ENCODE measurements at regions of chr19 and their contacts with region 1.

Region 1: DNA sequence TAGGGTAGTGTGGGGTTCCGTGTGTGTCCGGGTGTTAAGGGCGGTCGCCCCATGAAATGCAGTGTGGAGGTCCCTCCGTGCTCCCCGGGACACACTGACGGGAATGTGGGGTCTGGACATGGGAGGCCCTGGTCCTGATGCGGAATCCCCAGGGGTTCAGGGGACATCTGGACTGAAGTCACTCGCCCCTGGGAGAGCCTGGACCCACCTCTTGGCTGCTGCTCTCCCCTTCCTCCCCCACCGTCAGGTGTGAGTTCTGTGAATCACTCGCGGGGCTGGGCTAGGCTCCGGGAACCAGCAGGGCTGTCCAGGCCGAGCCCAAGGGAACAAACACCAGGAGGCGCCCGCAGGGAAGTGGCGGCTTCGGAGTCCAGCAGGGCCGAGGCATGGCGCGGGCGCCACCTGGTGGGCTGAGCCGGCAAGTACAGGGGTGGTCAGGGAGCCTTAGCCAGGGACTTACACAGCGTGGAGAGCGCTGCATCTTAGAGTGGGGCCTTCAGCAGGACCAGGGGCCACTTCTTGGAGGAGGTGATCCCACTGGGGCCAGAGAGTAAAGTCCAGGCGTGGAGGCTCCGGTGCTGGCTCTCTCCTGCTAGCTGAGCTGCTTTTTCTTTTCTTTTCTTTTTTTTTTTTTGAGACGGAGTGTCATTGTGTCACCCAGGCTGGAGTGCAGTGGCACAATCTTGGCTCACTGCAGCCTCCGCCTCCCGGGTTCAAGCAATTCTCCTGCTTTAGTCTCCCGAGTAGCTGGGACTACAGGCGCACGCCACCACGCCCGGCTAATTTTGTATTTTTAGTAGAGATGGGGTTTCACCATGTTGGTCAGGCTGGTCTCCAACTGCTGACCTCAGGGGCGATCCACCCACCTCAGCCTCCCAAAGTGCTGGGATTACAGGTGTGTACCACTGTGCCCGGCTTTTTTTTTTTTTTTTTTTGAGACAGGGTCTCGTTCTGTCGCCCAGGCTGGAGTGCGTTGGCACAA is 20.1 kb downstream of the WTIP start:
- DNase-seq: peak; percentile 76
- ATAC-seq: peak; percentile 82
- H3K4me3 ChIP-seq: no peak overlapping the region
- H3K27ac ChIP-seq: no peak overlapping the region
- H3K4me1 ChIP-seq: peaks cover 24% of the 10 kb centered on the region
- H3K27me3 ChIP-seq: no peaks in the 10 kb centered on the region
- CTCF ChIP-seq: peak; percentile 99
- EP300 ChIP-seq: no peak
- POLR2A ChIP-seq: no peak
- RAD21 ChIP-seq: peak; percentile 98

Region 2: GRCh38 chr19:34471906-34472700 is 29.5 kb before region 1 on chr19:
- CTCF ChIA-PET with region 1: interaction called, 12 read pairs
- POLR2A ChIA-PET with region 1: no interaction called
- in situ Hi-C with region 1: no loop called
- intact Hi-C with region 1: loop called (anchors 1 kb)
- DNase-seq: no peak
- ATAC-seq: no peak
- H3K4me3 ChIP-seq: no peak overlapping the region
- H3K27ac ChIP-seq: no peak overlapping the region
- H3K4me1 ChIP-seq: peaks cover 11% of the 10 kb centered on the region
- H3K27me3 ChIP-seq: no peaks in the 10 kb centered on the region
- CTCF ChIP-seq: no peak
- EP300 ChIP-seq: no peak
- POLR2A ChIP-seq: no peak
- RAD21 ChIP-seq: no peak

Region 3: GRCh38 chr19:34556488-34556887 is 54.9 kb after region 1 on chr19:
- CTCF ChIA-PET with region 1: no interaction called
- POLR2A ChIA-PET with region 1: no interaction called
- in situ Hi-C with region 1: no loop called
- intact Hi-C with region 1: no loop called
- DNase-seq: peak; percentile 13
- ATAC-seq: peak; percentile 81
- H3K4me3 ChIP-seq: no peak overlapping the region
- H3K27ac ChIP-seq: no peak overlapping the region
- H3K4me1 ChIP-seq: no peaks in the 10 kb centered on the region
- H3K27me3 ChIP-seq: peaks cover 3 to 26% of the 10 kb centered on the region in 2 experiments; a peak in 3 of 5 replicates
- CTCF ChIP-seq: peak; percentile 71
- EP300 ChIP-seq: no peak
- POLR2A ChIP-seq: no peak
- RAD21 ChIP-seq: no peak

Measured in HepG2 (cell line).